ENCODE measurements at regions of chr19 and their contacts with region 1.

Region 1: GRCh38 chr19:984165-984967 is at the start of gene WDR18:
- DNase-seq: peak; percentile 89
- ATAC-seq: peak; percentile 91
- H3K4me3 ChIP-seq: peak within 1 kb of the TSS; percentile 87 to 98 (median 94)
- H3K27ac ChIP-seq: peak within 1 kb of the TSS; percentile 85 to 97 (median 92)
- H3K4me1 ChIP-seq: peaks cover 17 to 19% of the 10 kb centered on the region in 2 donors
- H3K27me3 ChIP-seq: peaks cover 0 to under 1% (median 0%) of the 10 kb centered on the region in 3 donors
- CTCF ChIP-seq: peak; percentile 4 to 45 (median 23)
- POLR2A ChIP-seq: peak; percentile 52 to 62
- total RNA-seq, gene WDR18: 4.4 to 59.0 (median 28.6) TPM

Region 2: GRCh38 chr19:771332-771785 is 213.0 kb before region 1 on chr19:
- in situ Hi-C with region 1: loop called in 3 of 4 experiments (anchors 5 to 10 kb)
- intact Hi-C with region 1: loop called (anchors 5 kb)
- DNase-seq: no peak
- ATAC-seq: no peak
- H3K4me3 ChIP-seq: no peak overlapping the region
- H3K27ac ChIP-seq: no peak overlapping the region
- H3K4me1 ChIP-seq: no peaks in the 10 kb centered on the region
- H3K27me3 ChIP-seq: peaks cover 0 to 9% (median 0%) of the 10 kb centered on the region in 3 donors
- CTCF ChIP-seq: peak in 3 of 5 experiments; percentile 39 to 48 (median 47)
- POLR2A ChIP-seq: no peak

Region 3: DNA sequence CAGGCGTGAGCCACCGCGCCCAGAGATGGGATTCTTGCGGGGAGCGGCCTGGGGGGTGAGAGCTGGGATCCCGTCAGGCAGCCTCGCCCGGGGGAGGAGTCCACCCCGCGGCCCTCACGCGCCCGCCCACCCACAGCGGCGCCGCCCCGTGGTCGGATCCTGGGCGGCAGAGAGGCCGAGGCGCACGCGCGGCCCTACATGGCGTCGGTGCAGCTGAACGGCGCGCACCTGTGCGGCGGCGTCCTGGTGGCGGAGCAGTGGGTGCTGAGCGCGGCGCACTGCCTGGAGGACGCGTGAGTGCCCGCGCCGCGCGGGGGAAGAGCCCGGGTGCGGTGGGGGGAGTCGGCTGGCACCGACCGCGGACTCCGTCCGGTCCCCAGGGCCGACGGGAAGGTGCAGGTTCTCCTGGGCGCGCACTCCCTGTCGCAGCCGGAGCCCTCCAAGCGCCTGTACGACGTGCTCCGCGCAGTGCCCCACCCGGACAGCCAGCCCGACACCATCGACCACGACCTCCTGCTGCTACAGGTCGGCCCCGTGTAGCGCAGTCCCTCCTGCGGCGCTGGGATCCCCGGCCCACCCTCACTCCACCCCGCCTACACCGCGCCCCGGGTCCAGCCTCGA is 123.8 kb before region 1 on chr19:
- in situ Hi-C with region 1: loop called in 1 of 4 experiments (anchors 25 kb)
- intact Hi-C with region 1: loop called (anchors 5 kb)
- DNase-seq: peak in 1 of 2 donors; percentile 68
- ATAC-seq: peak in 1 of 2 donors; percentile 9
- H3K4me3 ChIP-seq: peak overlapping the region; percentile 31 to 54 (median 42)
- H3K27ac ChIP-seq: peak overlapping the region in 2 of 4 donors; percentile 68 to 75
- H3K4me1 ChIP-seq: no peaks in the 10 kb centered on the region
- H3K27me3 ChIP-seq: peaks cover 35 to 59% (median 54%) of the 10 kb centered on the region in 3 donors
- CTCF ChIP-seq: no peak
- POLR2A ChIP-seq: no peak

Region 4: DNA sequence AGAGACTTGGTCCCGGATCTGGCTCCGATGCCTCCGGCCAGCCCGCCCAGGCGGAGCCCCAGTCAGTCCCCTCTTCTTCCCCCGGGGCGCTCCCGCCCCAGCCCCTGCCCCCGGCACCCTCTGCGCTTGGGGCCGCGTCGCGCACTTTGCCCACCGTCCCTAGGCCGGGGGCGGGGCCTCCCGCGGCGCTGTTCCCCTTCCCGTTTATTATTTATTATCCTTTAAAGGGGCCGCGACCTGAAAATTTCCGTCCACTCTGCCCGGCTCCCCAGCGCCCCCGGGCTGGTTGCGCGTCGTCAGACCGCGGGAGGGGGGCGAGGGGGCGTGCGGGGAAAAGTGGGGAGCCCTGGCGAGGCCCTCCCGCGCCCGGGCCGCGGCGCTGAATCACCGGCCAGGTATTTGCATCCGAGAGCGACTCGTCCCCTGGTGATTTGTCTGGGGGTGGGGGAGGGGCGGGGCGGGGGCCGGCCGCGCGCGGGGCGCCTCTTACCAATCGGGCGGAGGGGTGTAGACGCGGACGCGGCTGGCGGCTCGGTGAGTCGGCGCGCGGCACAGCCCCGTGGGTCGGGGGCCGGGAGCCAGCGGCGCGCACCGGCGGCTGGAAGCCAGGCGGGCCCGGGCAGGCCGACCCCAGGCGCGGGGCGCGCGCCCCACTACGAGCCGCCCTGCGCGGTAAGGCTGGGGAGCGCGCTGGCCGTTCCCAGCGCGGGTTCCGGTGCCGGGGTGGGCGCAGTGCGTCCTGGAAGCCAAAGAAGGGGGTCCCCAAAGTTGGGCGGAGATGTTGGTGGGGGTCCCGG is 58.6 kb before region 1 on chr19 and contains the start of gene ARID3A:
- in situ Hi-C with region 1: loop called (anchors 5 kb)
- intact Hi-C with region 1: loop called (anchors 1 kb)
- DNase-seq: peak; percentile 61 to 63
- ATAC-seq: peak; percentile 83 to 85
- H3K4me3 ChIP-seq: peak within 1 kb of the TSS; percentile 86 to 96 (median 93)
- H3K27ac ChIP-seq: peak within 1 kb of the TSS; percentile 81 to 91 (median 86)
- H3K4me1 ChIP-seq: peaks cover 5 to 19% of the 10 kb centered on the region in 2 donors
- H3K27me3 ChIP-seq: peaks cover 8% of the 10 kb centered on the region in 3 donors
- CTCF ChIP-seq: peak in 3 of 5 experiments; percentile 2 to 18 (median 16)
- POLR2A ChIP-seq: peak; percentile 59 to 87
- total RNA-seq, gene ARID3A: 1.8 to 9.9 (median 7.8) TPM

Region 5: DNA sequence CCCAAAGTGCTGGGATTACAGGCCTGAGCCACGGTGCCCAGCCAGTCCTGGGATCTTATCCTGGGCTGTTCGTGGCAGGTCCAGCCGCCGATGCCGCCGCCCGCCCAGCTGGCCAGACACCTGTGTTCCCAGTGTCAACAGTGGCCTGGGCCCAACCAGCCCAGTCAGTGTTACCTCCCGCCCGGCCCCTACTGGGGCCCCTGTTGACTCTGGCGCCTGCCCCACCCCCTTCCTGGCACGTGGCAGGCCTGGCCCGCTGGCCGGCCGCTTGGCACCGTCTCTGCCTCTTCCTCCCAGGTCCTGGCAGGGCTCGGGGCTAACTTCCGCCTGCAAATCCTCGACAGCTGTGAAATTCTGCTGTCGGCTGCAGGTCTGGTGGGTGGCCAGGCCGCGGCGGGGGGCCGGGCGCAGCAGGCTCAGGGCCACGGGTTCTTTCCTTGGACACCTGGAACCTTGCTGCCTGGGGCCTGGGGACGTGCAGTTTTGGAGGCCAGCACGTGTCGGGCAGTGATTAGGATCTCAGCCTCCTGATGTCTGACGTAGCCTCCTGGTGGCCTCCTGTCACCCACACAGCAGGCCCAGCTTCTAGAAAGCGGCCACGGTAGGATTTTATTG is 49.4 kb before region 1 on chr19:
- in situ Hi-C with region 1: no loop called
- intact Hi-C with region 1: loop called (anchors 1 kb)
- DNase-seq: peak; percentile 82 to 87
- ATAC-seq: peak; percentile 85 to 89
- H3K4me3 ChIP-seq: peak overlapping the region in 1 of 4 donors; percentile 7
- H3K27ac ChIP-seq: peak overlapping the region; percentile 71 to 79 (median 74)
- H3K4me1 ChIP-seq: peaks cover 20 to 28% of the 10 kb centered on the region in 2 donors
- H3K27me3 ChIP-seq: no peaks in the 10 kb centered on the region
- CTCF ChIP-seq: no peak
- POLR2A ChIP-seq: peak in 1 of 2 donors; percentile 34

Region 6: GRCh38 chr19:1020868-1021425 is 36.6 kb after region 1 on chr19 and contains the start of gene TMEM259:
- in situ Hi-C with region 1: no loop called
- intact Hi-C with region 1: loop called (anchors 1 kb)
- DNase-seq: peak; percentile 97 to 98
- ATAC-seq: peak; percentile 79 to 85
- H3K4me3 ChIP-seq: peak within 1 kb of the TSS; percentile 86 to 99 (median 90)
- H3K27ac ChIP-seq: peak within 1 kb of the TSS; percentile 89 to 94 (median 91)
- H3K4me1 ChIP-seq: peaks cover 40 to 48% of the 10 kb centered on the region in 2 donors
- H3K27me3 ChIP-seq: peaks cover 3 to 9% (median 8%) of the 10 kb centered on the region in 3 donors
- CTCF ChIP-seq: peak in 1 of 5 experiments; percentile 27
- POLR2A ChIP-seq: peak; percentile 77 to 85
- total RNA-seq, gene TMEM259: 98.5 to 150 (median 124) TPM

Region 7: DNA sequence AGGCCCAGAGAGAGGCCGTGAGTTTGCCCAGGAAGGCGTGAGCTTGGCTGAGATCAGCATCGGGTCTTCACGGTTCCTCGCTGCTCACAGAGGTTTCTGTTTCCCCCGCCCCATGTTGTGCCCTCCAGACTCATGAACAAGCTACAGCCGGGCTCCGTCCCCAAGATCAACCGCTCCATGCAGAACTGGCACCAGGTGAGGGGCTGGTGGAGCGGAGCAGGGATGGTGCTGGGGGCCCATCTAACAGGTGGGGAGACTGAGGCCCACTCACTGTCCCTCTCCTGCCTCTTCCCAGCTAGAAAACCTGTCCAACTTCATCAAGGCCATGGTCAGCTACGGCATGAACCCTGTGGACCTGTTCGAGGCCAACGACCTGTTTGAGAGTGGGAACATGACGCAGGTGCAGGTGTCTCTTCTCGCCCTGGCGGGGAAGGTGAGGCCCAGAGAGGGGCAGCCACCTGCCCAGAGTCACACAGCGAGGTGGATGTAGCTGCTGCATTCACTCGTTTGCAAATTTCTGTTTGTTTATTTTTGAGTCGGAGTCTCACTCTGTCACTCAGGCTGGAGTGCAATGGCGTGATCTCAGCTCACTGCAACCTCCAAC is 48.0 kb after region 1 on chr19:
- in situ Hi-C with region 1: no loop called
- intact Hi-C with region 1: no loop called
- DNase-seq: no peak
- ATAC-seq: no peak
- H3K4me3 ChIP-seq: no peak overlapping the region
- H3K27ac ChIP-seq: no peak overlapping the region
- H3K4me1 ChIP-seq: peaks cover 0 to 8% of the 10 kb centered on the region in 2 donors
- H3K27me3 ChIP-seq: peaks cover 6 to 14% (median 11%) of the 10 kb centered on the region in 3 donors
- CTCF ChIP-seq: no peak
- POLR2A ChIP-seq: no peak

Measured in gastrocnemius medialis (tissue), 4 donors.